Left lung (tissue), 14 donors: ENCODE measurements at regions of chr11 and their contacts with region 1.

Region 1: DNA sequence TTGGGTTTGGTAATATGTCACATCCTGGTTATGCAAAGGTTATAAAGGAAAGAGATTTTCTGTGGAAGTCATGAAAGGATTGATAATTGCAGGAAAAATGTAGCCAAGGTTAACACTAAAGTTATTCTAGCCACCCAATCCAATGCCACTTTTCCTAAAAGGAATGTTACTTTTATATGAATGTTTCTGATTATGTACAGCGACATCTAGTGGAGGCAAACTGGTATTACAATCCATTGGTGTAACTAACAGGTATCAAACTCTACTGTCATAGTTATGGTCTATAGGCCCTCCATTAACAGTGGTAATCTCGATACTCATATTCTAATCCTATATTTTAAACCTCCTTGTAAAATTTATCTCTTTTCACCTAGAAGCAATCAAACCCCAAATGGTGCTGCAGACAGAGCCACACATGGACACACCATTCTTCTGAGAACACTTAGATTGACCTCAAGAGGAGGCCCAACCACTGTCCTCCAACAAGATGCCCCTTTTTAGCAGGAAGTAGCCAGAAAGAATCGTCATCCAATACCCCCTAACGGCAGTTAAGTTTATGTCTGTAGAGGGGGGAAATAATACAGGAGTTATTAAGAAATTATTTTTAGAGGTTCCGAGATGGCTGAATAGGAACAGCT is 74.9 kb upstream of the RAG2 start:
- DNase-seq: no peak
- ATAC-seq: peak; percentile 50
- H3K4me3 ChIP-seq: no peak overlapping the region
- H3K27ac ChIP-seq: no peak overlapping the region
- H3K4me1 ChIP-seq: no peaks in the 10 kb centered on the region
- H3K27me3 ChIP-seq: no peaks in the 10 kb centered on the region
- CTCF ChIP-seq: peak; percentile 76 to 85

Region 2: GRCh38 chr11:36564376-36565030 is 108.4 kb before region 1 on chr11:
- intact Hi-C with region 1: loop called in 1 of 2 experiments (anchors 10 kb)
- DNase-seq: peak in 2 of 4 donors; percentile 67 to 77
- ATAC-seq: peak; percentile 91
- H3K4me3 ChIP-seq: peak overlapping the region in 1 of 2 donors; percentile 5
- H3K27ac ChIP-seq: no peak overlapping the region
- H3K4me1 ChIP-seq: peaks cover 0 to 3% of the 10 kb centered on the region in 2 donors
- H3K27me3 ChIP-seq: peaks cover 0 to 4% of the 10 kb centered on the region in 2 donors
- CTCF ChIP-seq: peak; percentile 20 to 35